CD8-positive, alpha-beta memory T cell (primary cell): ENCODE measurements at regions of chr2 and their contacts with region 1.

Region 1: GRCh38 chr2:159118115-159118858 is 149.8 kb downstream of the TANC1 start:
- DNase-seq: peak; percentile 52 to 72 (median 68)
- H3K4me3 ChIP-seq: no peak overlapping the region
- H3K4me3 Mint-ChIP-seq: peak overlapping the region in 1 of 7 donors; percentile 4
- H3K27ac ChIP-seq: no peak overlapping the region
- H3K27ac Mint-ChIP-seq: peak overlapping the region in 1 of 8 donors; percentile 26
- H3K4me1 ChIP-seq: peaks cover 3% of the 10 kb centered on the region
- H3K4me1 Mint-ChIP-seq: peaks cover 5 to 16% (median 9%) of the 10 kb centered on the region in 3 donors
- H3K27me3 ChIP-seq: no peaks in the 10 kb centered on the region
- H3K27me3 Mint-ChIP-seq: peaks cover 5 to 20% of the 10 kb centered on the region in 2 donors

Region 2: GRCh38 chr2:158903711-158904443 is 214.4 kb before region 1 on chr2:
- CTCF ChIA-PET with region 1: interaction called, 14 read pairs
- POLR2A ChIA-PET with region 1: no interaction called
- DNase-seq: no peak
- H3K4me3 ChIP-seq: no peak overlapping the region
- H3K4me3 Mint-ChIP-seq: no peak overlapping the region
- H3K27ac ChIP-seq: no peak overlapping the region
- H3K27ac Mint-ChIP-seq: peak overlapping the region in 1 of 8 donors; percentile 42
- H3K4me1 ChIP-seq: no peaks in the 10 kb centered on the region
- H3K4me1 Mint-ChIP-seq: peaks cover 0 to 3% (median 0%) of the 10 kb centered on the region in 3 donors
- H3K27me3 ChIP-seq: no peaks in the 10 kb centered on the region
- H3K27me3 Mint-ChIP-seq: peaks cover 4 to 5% of the 10 kb centered on the region in 2 donors

Region 3: DNA sequence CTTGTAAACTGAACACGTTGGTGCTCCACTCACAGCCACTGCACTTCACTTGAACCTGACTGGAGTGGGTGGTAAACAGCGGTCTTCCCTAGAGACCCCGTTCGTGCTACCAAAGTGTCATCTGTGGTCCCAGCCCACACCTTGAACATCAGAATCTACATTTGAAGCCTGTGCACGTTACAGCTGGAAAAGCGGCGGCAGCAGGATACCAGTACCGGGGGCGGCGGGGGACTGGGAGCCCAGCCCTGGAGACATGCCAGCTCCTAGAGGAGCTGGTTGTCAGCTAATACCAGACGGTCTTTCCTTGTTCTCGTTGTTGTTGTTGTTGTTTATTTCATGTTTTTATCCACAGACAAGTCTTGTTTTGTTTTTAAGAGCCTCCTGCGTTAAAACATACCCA is 11.5 kb after region 1 on chr2:
- CTCF ChIA-PET with region 1: interaction called, 10 read pairs
- POLR2A ChIA-PET with region 1: no interaction called
- DNase-seq: no peak
- H3K4me3 ChIP-seq: no peak overlapping the region
- H3K4me3 Mint-ChIP-seq: no peak overlapping the region
- H3K27ac ChIP-seq: no peak overlapping the region
- H3K27ac Mint-ChIP-seq: peak overlapping the region in 2 of 8 donors; percentile 5 to 58
- H3K4me1 ChIP-seq: peaks cover 7% of the 10 kb centered on the region
- H3K4me1 Mint-ChIP-seq: peaks cover 5 to 21% (median 20%) of the 10 kb centered on the region in 3 donors
- H3K27me3 ChIP-seq: no peaks in the 10 kb centered on the region
- H3K27me3 Mint-ChIP-seq: peaks cover 0 to 4% of the 10 kb centered on the region in 2 donors